Right ventricle myocardium inferior (tissue), 1 donor: ENCODE measurements at regions of chr6 and their contacts with region 1.

Region 1: GRCh38 chr6:163579880-163580295 is 165.4 kb downstream of the QKI start:
- DNase-seq: no peak
- ATAC-seq: peak; percentile 38

Region 2: GRCh38 chr6:163180874-163181541 is 398.9 kb before region 1 on chr6:
- intact Hi-C with region 1: loop called (anchors 5 kb)
- DNase-seq: peak; percentile 86
- ATAC-seq: peak; percentile 95

Region 3: GRCh38 chr6:163427498-163428254 is 152.2 kb before region 1 on chr6:
- intact Hi-C with region 1: loop called (anchors 5 kb)
- DNase-seq: no peak
- ATAC-seq: peak; percentile 25

Region 4: GRCh38 chr6:163745536-163746400 is 165.9 kb after region 1 on chr6:
- intact Hi-C with region 1: loop called (anchors 5 kb)
- DNase-seq: no peak
- ATAC-seq: peak; percentile 94